Gastrocnemius medialis (tissue), 4 donors: ENCODE measurements at regions of chr6 and their contacts with region 1.

Region 1: GRCh38 chr6:90478789-90479602 is 107.9 kb downstream of the MAP3K7 start:
- DNase-seq: peak; percentile 92 to 95
- ATAC-seq: peak; percentile 99 to 100
- H3K4me3 ChIP-seq: no peak overlapping the region
- H3K27ac ChIP-seq: peak overlapping the region; percentile 31 to 68 (median 58)
- H3K4me1 ChIP-seq: peaks cover 0 to 5% of the 10 kb centered on the region in 2 donors
- H3K27me3 ChIP-seq: no peaks in the 10 kb centered on the region
- CTCF ChIP-seq: peak; percentile 86 to 94 (median 93)
- POLR2A ChIP-seq: no peak

Region 2: DNA sequence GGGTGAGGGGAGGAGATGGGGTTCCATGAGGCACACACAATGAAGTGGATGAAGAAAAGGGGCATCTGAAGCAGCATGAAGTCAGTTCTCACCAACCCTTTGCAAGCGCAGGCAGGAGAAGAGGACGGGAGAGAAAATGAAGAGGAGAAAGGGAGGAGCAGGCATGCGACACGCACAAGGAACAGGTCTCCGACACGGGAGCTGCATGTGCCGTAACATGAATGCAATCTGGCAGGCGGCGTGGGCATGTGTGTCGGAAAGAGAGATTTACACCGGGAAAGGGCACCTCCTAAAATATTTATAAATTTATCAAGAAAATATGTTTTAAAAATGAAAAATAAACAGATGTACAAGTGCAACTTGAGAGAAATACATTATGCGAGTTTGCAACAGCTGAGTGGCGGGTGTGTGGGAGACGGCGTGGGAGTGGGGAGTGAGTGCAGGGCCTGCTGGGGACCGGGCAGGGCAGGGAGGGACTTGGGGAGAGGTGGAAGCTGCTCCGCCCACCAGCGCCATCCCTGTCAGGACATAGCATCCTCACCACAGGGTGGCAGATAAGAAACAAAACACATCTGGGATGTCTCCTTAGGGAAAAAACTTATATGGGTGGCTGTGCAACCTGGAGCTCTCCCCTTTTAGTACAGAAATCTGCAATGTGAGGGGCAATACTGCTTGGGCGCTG is 544.2 kb before region 1 on chr6:
- in situ Hi-C with region 1: loop called (anchors 5 to 10 kb)
- intact Hi-C with region 1: loop called (anchors 1 kb)
- DNase-seq: no peak
- ATAC-seq: no peak
- H3K4me3 ChIP-seq: no peak overlapping the region
- H3K27ac ChIP-seq: no peak overlapping the region
- H3K4me1 ChIP-seq: no peaks in the 10 kb centered on the region
- H3K27me3 ChIP-seq: no peaks in the 10 kb centered on the region
- CTCF ChIP-seq: no peak
- POLR2A ChIP-seq: no peak

Region 3: DNA sequence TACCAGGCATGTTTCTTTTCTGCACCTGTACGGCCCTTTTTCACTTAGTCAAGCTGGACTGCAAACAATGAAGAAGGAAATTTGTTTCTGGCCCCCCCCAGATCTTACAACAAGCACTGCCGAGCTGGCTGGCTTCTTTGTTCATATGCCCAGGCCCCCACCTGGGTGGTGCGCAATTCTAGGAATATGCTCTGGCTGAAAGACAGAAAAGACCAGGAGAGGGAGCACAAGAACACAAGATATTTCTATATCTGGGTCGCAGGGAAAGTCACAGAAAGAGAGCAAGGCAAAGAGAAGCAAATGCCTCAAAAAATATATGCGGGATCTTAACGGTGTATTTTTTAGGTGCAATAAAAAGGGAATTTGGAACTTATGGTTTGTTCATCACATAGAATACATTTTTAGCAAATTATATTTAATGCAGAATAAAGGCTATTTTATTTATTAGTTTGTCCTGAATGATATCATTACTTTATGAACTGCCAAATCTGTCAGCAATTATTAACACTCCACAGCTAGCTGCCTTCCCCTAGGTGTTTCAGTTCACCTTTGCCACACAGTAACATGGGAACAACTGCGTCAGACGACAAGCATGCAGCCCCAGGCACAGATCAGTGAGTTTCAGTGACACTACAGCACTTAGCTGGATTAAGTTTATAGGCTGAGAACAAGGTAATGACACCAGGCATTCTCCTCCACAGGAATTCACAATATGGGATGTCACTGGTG is 508.2 kb before region 1 on chr6:
- in situ Hi-C with region 1: loop called in 1 of 4 experiments (anchors 10 kb)
- intact Hi-C with region 1: no loop called
- DNase-seq: no peak
- ATAC-seq: peak; percentile 59 to 75
- H3K4me3 ChIP-seq: no peak overlapping the region
- H3K27ac ChIP-seq: peak overlapping the region in 1 of 4 donors; percentile 64
- H3K4me1 ChIP-seq: peaks cover 30 to 36% of the 10 kb centered on the region in 2 donors
- H3K27me3 ChIP-seq: no peaks in the 10 kb centered on the region
- CTCF ChIP-seq: peak; percentile 26 to 64 (median 44)
- POLR2A ChIP-seq: no peak

Region 4: DNA sequence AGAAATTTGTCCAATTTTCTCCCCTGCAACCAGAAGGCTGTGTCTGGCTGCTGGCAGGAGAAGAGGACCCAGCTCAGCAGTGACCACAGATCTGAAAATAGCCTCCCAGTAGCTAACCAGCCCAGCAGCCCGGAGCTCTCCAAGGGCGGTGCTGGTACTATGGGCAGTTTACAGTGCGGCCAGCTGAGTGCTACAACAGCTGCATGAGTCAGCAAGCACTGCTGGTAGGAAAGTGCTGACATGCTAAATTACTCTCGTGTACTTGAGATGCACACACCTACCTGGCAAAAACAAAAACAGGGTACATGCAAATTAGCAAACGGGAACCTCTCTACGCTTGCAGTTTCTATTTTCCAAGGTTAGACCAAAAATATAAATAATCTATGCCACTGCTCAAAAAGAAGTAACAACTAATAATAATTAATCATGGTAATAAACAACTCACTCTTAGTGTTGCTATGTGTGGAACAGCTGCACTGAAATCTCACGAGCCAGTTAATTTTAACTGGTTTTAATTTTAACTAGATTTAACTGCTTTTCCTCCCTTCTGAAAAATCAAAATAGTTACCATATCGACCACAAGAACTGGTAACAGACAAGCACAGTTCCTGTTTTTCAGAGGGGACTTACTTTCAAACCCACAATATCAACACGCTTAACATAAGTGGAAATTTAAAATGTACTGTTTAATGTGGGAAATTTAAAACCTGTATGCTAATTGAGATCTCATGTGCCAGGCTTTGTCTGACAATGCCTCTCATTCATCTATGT is 193.2 kb before region 1 on chr6:
- in situ Hi-C with region 1: loop called in 2 of 4 experiments (anchors 5 to 10 kb)
- intact Hi-C with region 1: loop called (anchors 2 kb)
- DNase-seq: peak; percentile 94 to 97
- ATAC-seq: peak; percentile 89 to 96
- H3K4me3 ChIP-seq: peak overlapping the region; percentile 27 to 49 (median 43)
- H3K27ac ChIP-seq: peak overlapping the region; percentile 75 to 92 (median 84)
- H3K4me1 ChIP-seq: peaks cover 60 to 66% of the 10 kb centered on the region in 2 donors
- H3K27me3 ChIP-seq: no peaks in the 10 kb centered on the region
- CTCF ChIP-seq: no peak
- POLR2A ChIP-seq: peak in 1 of 2 donors; percentile 18